Gastrocnemius medialis (tissue), 4 donors: ENCODE measurements at regions of chr7 and their contacts with region 1.

Region 1: GRCh38 chr7:131365838-131366237 is 38.2 kb downstream of the MKLN1 start:
- DNase-seq: no peak
- ATAC-seq: peak in 1 of 2 donors; percentile 51
- H3K4me3 ChIP-seq: no peak overlapping the region
- H3K27ac ChIP-seq: peak overlapping the region in 1 of 4 donors; percentile 0
- H3K4me1 ChIP-seq: peaks cover 79 to 88% of the 10 kb centered on the region in 2 donors
- H3K27me3 ChIP-seq: no peaks in the 10 kb centered on the region
- CTCF ChIP-seq: no peak
- POLR2A ChIP-seq: no peak

Region 2: DNA sequence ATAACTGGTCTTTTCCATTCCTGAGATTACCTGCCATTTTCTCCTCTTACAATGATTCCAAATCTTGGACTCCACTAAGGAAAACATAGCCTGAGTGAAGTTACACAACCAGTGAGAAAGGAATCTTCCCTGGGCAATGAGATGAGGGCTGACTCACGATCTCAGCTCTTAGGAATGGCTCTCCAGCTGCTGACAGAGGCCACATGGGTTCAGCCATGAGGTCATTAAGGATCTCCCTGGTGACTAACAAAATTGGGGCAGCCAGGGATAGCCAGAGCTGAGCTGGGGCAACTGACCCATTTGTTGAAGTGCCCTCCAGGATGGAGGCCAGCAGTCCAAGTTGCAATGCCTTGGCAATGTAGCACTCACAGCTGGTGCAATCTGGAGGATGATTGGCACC is 116.8 kb before region 1 on chr7:
- in situ Hi-C with region 1: no loop called
- intact Hi-C with region 1: no loop called
- DNase-seq: peak; percentile 95 to 97
- ATAC-seq: peak; percentile 91 to 99
- H3K4me3 ChIP-seq: no peak overlapping the region
- H3K27ac ChIP-seq: peak overlapping the region; percentile 66 to 87 (median 72)
- H3K4me1 ChIP-seq: peaks cover 17 to 33% of the 10 kb centered on the region in 2 donors
- H3K27me3 ChIP-seq: no peaks in the 10 kb centered on the region
- CTCF ChIP-seq: no peak
- POLR2A ChIP-seq: peak in 1 of 2 donors; percentile 24

Region 3: DNA sequence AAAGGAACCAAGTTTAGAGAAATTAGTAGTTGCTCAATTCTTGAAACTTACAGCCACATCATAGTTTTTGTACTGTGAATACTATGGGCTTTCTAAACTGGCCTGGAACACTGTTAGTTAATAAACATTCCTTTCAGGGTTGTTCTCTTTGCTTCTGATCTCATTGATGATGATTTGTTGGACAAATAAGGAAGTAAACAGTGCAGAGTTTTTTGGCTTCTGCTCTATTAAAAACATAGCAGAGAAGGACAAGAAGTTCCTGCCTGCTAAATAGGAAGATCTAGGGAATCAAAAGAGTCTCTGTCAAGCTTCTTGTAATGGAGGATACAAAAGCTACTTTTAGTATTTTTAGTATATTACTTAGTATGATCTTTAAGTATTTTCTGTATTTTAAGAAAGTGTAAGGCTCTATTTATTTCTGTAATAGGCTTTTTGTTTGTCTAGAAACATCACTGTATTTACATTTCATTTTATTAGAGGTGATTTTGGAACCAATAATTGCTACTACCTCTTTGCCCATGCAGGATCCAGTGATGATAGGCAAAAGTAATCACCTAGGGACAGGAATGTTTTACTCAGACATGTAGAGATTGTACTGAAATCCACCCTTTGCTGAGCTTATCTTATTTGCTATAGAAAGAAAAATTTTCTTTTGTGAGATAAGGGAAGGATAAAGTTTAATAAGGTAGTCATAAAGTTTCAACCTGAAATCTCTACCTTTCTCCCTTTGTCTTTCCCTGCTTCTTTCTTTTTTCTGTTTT is 35.2 kb after region 1 on chr7:
- in situ Hi-C with region 1: no loop called
- intact Hi-C with region 1: loop called (anchors 5 kb)
- DNase-seq: no peak
- ATAC-seq: peak; percentile 49 to 85
- H3K4me3 ChIP-seq: no peak overlapping the region
- H3K27ac ChIP-seq: peak overlapping the region; percentile 55 to 77 (median 64)
- H3K4me1 ChIP-seq: peaks cover 19 to 20% of the 10 kb centered on the region in 2 donors
- H3K27me3 ChIP-seq: no peaks in the 10 kb centered on the region
- CTCF ChIP-seq: no peak
- POLR2A ChIP-seq: no peak